ENCODE measurements at regions of chr16 and their contacts with region 1.

Region 1: GRCh38 chr16:28863929-28864793 is 518 bp downstream of the SH2B1 start:
- DNase-seq: peak in 1 of 2 donors; percentile 27
- ATAC-seq: peak in 7 of 8 donors; percentile 1 to 14 (median 5)
- H3K4me3 ChIP-seq: peak overlapping the region; percentile 52 to 98 (median 96)
- H3K27ac ChIP-seq: peak overlapping the region; percentile 93 to 100 (median 98)
- H3K4me1 ChIP-seq: peaks cover 4 to 27% (median 19%) of the 10 kb centered on the region in 9 donors
- H3K27me3 ChIP-seq: no peaks in the 10 kb centered on the region
- CTCF ChIP-seq: no peak

Region 2: DNA sequence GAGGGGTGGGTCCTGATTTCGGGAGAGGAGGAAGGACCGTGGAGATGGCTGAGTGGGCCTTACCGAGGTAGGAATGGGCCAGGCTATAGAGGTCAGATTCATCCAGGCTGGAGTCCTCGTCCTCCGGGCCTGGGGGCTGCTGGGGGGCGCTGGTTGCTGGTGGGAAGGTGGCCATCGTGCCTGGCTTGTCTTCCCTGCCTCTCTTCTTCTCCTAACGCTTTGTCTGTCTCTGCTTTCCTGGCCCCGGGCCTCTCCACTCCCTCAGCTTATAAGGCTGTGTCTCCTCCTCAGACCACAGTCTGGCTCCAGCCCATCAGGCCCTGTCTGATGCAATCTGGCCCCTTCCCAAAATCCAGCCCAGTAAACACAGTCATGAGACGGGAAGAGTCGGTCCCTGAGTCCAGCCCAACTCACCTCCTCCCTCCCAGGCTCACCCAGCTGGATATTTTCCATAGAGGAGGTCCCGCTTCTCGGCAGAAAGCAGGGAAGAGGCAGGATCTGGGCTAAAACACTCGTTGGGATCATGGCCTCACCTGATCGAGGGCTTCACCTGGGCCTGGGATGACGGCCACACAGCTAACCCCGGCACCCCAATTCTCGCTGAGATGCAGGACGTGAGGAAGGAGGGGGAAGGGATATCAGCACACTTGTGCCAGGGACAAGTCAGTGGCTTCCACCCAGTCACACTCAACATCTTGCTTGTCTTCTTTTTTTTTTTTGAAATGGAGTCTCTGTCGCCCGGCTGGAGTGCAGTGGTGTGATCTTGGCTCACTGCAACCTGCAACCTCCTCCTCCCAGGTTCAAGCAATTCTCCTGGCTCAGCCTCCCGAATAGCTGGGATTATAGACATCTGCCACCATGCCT is 325.2 kb before region 1 on chr16 and contains the start of gene NUPR1:
- intact Hi-C with region 1: no loop called
- DNase-seq: peak; percentile 88 to 97
- ATAC-seq: peak; percentile 97 to 99 (median 98)
- H3K4me3 ChIP-seq: peak within 1 kb of the TSS; percentile 34 to 67 (median 52)
- H3K27ac ChIP-seq: peak within 1 kb of the TSS; percentile 86 to 97 (median 90)
- H3K4me1 ChIP-seq: peaks cover 3 to 55% (median 22%) of the 10 kb centered on the region in 9 donors
- H3K27me3 ChIP-seq: no peaks in the 10 kb centered on the region
- CTCF ChIP-seq: no peak
- total RNA-seq, gene NUPR1: 16.7 to 58.1 (median 27.9) TPM

Region 3: DNA sequence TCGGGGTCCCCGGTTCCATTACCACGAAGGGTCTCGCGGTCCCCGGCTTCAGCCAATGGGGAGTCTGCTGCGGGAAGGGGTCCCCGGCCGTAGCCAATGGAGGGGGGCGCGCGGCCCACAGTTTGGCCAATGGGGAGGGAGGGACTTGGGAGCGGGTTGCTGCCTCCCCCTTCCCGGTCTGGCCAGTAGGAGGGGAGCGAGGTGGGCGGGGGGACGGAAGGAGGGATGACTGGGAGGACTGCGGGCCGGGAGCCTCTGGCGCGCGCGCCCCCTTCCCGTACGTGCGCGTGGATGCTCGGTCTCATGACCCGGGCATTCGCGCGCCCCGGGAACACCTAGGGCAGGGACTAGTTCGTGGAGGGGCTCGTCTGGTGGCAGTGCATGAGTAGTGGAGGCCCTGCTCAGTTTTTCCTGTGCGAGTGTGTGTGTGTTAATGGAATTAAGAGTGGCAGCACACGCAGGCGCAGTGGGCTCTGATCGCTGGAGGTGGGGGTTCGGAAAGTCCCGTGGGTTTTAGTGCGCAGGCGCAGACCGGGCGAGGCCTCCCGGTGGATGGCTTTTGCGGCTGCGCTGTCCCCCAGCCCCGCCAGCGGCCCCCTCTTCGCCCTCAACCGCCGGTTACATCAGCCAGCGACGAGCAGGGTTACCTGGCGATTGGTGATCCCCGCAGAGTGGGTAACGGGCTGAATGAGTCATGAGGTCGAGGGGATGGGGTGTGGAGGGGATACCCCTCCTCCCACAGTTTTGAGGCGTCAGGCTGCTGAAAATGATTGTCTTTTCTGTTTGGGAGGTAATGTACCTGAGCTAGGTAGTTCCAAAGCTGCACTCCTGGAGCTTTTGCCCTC is 40.1 kb before region 1 on chr16:
- intact Hi-C with region 1: loop called in 1 of 10 experiments (anchors 5 kb)
- DNase-seq: peak; percentile 97 to 99
- ATAC-seq: peak; percentile 92 to 97 (median 95)
- H3K4me3 ChIP-seq: peak overlapping the region; percentile 79 to 100 (median 100)
- H3K27ac ChIP-seq: peak overlapping the region; percentile 92 to 100 (median 100)
- H3K4me1 ChIP-seq: peaks cover 8 to 34% (median 23%) of the 10 kb centered on the region in 9 donors
- H3K27me3 ChIP-seq: no peaks in the 10 kb centered on the region
- CTCF ChIP-seq: peak in 7 of 9 donors; percentile 24 to 49 (median 39)

Region 4: GRCh38 chr16:28846080-28846932 is 17.9 kb before region 1 on chr16 and contains the start of gene TUFM:
- intact Hi-C with region 1: loop called in 4 of 10 experiments (anchors 1 kb)
- DNase-seq: peak; percentile 98 to 99
- ATAC-seq: peak; percentile 98 to 99 (median 99)
- H3K4me3 ChIP-seq: peak within 1 kb of the TSS; percentile 79 to 94 (median 86)
- H3K27ac ChIP-seq: peak within 1 kb of the TSS; percentile 48 to 90 (median 88)
- H3K4me1 ChIP-seq: peaks cover 5 to 27% (median 23%) of the 10 kb centered on the region in 9 donors
- H3K27me3 ChIP-seq: no peaks in the 10 kb centered on the region
- CTCF ChIP-seq: peak; percentile 34 to 86 (median 80)
- total RNA-seq, gene TUFM: 193 to 250 (median 236) TPM

Region 5: GRCh38 chr16:28879841-28880588 is 15.9 kb after region 1 on chr16:
- intact Hi-C with region 1: loop called in 1 of 10 experiments (anchors 1 kb)
- DNase-seq: peak; percentile 89
- ATAC-seq: peak; percentile 87 to 96 (median 95)
- H3K4me3 ChIP-seq: peak overlapping the region; percentile 48 to 99 (median 78)
- H3K27ac ChIP-seq: peak overlapping the region in 1 of 10 donors; percentile 65
- H3K4me1 ChIP-seq: peaks cover 0 to 16% (median 13%) of the 10 kb centered on the region in 9 donors
- H3K27me3 ChIP-seq: peaks cover 0 to 23% (median 5%) of the 10 kb centered on the region in 7 donors
- CTCF ChIP-seq: peak in 4 of 9 donors; percentile 15 to 39 (median 22)

Region 6: DNA sequence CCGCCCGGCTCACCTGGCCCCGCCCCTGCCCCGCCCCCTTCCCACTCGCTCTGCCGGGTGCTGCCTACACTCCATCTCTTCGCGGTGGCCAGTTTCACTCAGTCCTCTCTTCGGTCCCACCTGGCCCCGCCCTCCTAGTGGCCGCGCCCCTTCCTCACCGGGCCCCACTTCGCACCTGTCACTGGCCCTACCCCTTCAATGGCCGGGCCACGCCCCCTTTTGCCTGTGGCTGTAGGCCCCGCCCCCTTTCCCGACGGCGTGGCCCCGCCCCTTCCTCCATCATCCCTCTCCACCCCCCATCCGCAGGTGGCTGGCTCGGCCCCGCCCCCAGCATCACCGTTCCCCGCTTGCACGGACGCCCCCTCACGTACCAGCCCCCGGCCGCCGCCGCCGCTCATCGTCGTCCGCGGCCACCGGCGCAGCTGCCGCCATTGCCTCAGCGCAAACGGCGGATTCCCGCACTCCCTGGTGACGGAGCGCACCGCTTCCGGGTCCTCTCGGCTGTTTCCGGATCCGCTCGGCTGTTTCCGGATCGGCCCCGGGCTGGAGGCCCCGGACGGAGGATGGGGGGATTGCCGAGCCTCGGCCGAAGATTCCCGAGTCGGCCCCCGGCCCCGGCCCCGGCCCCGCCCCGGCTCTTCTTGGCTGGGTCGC is 60.7 kb after region 1 on chr16 and contains the start of gene RABEP2:
- intact Hi-C with region 1: loop called in 5 of 10 experiments (anchors 2 to 10 kb)
- DNase-seq: peak; percentile 93 to 97
- ATAC-seq: peak; percentile 93 to 96 (median 95)
- H3K4me3 ChIP-seq: peak within 1 kb of the TSS; percentile 42 to 92 (median 86)
- H3K27ac ChIP-seq: peak within 1 kb of the TSS; percentile 89 to 100 (median 99)
- H3K4me1 ChIP-seq: peaks cover 2 to 20% (median 11%) of the 10 kb centered on the region in 9 donors
- H3K27me3 ChIP-seq: no peaks in the 10 kb centered on the region
- CTCF ChIP-seq: no peak
- total RNA-seq, gene RABEP2: 11.8 to 20.0 (median 15.5) TPM

Region 7: GRCh38 chr16:28950648-28951409 is 86.7 kb after region 1 on chr16 and contains the start of gene NFATC2IP:
- intact Hi-C with region 1: loop called in 5 of 10 experiments (anchors 5 kb)
- DNase-seq: peak; percentile 99 to 100
- ATAC-seq: peak; percentile 97 to 100 (median 98)
- H3K4me3 ChIP-seq: peak within 1 kb of the TSS; percentile 75 to 99 (median 92)
- H3K27ac ChIP-seq: peak within 1 kb of the TSS; percentile 19 to 94 (median 90)
- H3K4me1 ChIP-seq: peaks cover 6 to 23% (median 16%) of the 10 kb centered on the region in 9 donors
- H3K27me3 ChIP-seq: no peaks in the 10 kb centered on the region
- CTCF ChIP-seq: no peak
- total RNA-seq, gene NFATC2IP: 13.8 to 22.5 (median 17.0) TPM

Measured in heart right ventricle (tissue), 16 donors.